Left cardiac atrium (tissue), 4 donors: ENCODE measurements at regions of chr11 and their contacts with region 1.

Region 1: GRCh38 chr11:107799218-107799859 is 59.2 kb downstream of the SLC35F2 start:
- DNase-seq: peak; percentile 69
- ATAC-seq: peak; percentile 61 to 72

Region 2: GRCh38 chr11:107427569-107428180 is 371.7 kb before region 1 on chr11:
- intact Hi-C with region 1: no loop called
- DNase-seq: no peak
- ATAC-seq: no peak

Region 3: DNA sequence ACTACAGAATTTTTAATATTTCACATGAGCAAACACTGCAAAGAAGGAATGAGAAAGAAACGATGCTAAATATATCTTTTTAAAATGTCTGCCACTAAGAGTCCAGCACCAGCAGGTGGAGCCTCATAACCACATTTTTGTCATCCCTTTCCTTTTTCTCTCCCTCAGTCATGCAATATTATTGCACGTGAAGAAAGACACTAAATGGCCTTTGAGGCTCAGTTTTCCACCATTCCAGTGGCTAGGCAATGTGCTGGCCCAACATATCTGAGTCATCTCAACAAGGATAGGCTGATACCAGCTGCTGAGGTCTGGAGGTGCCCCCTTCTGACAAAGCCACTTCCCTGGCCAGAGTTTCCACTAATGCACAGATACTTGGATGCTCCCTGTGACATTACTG is 235.6 kb before region 1 on chr11:
- intact Hi-C with region 1: no loop called
- DNase-seq: no peak
- ATAC-seq: peak; percentile 10 to 51

Region 4: DNA sequence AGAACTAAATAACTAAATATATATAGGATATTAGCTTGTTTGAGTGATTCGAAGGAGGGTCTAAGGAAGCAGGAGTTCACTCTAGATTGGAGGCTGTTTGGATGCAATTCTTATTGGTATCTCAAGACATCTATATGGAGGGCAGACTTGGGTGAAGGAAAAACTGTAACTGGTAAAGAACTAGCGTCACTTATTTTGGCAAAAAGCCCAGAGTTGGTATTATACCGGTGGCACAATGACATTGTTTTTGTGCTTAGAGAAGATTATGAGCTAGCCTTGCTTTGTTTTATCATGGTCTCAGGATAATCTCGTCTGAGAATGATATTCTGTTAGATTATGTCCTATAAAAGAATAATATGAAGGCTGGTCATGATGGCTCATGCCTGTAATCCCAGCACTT is 65.3 kb after region 1 on chr11:
- intact Hi-C with region 1: loop called in 1 of 2 experiments (anchors 2 kb)
- DNase-seq: no peak
- ATAC-seq: no peak

Region 5: GRCh38 chr11:107928046-107928766 is 128.9 kb after region 1 on chr11 and contains the start of gene RAB39A:
- intact Hi-C with region 1: no loop called
- DNase-seq: peak; percentile 91
- ATAC-seq: peak; percentile 97
- total RNA-seq, gene RAB39A: 1.1 TPM